ENCODE measurements at regions of chr1 and their contacts with region 1.

Region 1: DNA sequence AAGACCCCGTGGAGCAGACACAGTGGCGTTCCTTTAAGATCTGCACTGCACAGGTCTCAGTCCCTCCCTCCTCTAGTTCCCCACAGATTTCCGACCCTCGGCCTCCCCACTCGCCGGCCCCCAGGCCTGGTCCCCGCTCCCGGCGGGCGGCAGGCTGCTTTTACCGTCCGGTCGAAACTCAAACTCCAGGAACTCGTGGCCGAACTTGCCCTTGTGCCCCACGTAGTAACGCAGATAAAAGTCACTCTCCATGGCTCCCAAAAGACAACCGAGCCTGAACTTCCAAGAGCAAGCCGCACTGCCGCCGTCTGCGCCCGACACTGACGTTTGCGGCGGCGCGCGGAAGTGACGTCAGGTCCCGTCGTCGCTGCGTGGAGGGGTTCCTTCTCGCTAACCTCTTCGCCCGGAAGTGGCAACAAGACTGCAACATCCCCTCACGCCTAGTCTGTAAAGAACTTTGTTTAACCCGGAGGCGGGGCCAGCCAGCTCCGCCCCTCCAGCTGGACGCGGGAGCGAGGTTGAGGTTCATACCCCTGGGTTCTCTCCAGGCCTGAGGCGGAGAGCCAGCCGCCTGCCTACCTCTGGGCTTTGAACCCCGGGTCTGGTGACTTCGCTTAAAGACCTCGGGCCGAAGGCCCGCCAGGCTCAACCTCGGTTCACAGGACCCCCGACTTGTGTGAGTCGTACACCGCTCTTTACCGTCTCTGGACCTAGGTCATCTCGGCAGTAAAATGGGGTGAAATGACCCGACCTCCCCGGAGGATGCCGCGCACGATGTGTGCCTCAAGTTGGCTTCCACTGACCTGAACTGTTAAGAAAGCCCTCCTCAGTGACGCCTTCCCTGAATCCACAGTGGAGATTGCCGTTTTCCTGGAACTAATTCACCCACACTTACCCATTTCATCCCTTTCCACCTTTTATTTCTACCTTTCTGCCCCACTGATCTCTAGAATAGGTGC is at the start of gene MAGOH:
- DNase-seq: peak; percentile 99
- H3K4me3 Mint-ChIP-seq: peak within 1 kb of the TSS; percentile 95
- H3K27ac Mint-ChIP-seq: peak within 1 kb of the TSS; percentile 92
- H3K4me1 Mint-ChIP-seq: peaks cover 24% of the 10 kb centered on the region
- H3K27me3 Mint-ChIP-seq: no peaks in the 10 kb centered on the region
- total RNA-seq, gene MAGOH: 96.4 and 107 TPM in 2 replicates

Region 2: GRCh38 chr1:52834798-52835197 is 403.7 kb before region 1 on chr1:
- intact Hi-C with region 1: no loop called
- DNase-seq: no peak
- H3K4me3 Mint-ChIP-seq: no peak overlapping the region
- H3K27ac Mint-ChIP-seq: no peak overlapping the region
- H3K4me1 Mint-ChIP-seq: no peaks in the 10 kb centered on the region
- H3K27me3 Mint-ChIP-seq: peaks cover 4% of the 10 kb centered on the region

Region 3: DNA sequence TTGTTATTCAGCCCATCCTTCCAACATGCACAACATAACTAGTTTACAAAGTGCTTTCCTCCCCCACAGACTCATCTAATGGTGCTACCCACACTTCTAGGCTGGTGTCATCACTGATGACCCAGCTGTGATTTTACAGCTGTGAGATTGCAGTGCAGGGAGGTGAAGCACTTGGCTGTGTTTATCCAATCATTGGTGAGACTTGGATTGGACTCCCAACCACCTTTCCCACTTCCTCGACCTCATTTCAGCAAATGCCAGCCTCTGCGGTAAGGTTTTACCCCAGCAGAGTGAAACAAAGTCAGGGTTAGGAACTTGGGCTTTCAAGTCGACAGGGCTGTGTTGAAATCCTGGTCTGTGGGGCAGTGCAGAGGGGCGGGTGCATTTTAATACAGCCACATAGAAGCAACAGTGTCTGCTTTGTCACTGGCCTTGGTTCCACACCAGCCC is 339.0 kb before region 1 on chr1:
- intact Hi-C with region 1: no loop called
- DNase-seq: no peak
- H3K4me3 Mint-ChIP-seq: no peak overlapping the region
- H3K27ac Mint-ChIP-seq: no peak overlapping the region
- H3K4me1 Mint-ChIP-seq: no peaks in the 10 kb centered on the region
- H3K27me3 Mint-ChIP-seq: no peaks in the 10 kb centered on the region

Region 4: DNA sequence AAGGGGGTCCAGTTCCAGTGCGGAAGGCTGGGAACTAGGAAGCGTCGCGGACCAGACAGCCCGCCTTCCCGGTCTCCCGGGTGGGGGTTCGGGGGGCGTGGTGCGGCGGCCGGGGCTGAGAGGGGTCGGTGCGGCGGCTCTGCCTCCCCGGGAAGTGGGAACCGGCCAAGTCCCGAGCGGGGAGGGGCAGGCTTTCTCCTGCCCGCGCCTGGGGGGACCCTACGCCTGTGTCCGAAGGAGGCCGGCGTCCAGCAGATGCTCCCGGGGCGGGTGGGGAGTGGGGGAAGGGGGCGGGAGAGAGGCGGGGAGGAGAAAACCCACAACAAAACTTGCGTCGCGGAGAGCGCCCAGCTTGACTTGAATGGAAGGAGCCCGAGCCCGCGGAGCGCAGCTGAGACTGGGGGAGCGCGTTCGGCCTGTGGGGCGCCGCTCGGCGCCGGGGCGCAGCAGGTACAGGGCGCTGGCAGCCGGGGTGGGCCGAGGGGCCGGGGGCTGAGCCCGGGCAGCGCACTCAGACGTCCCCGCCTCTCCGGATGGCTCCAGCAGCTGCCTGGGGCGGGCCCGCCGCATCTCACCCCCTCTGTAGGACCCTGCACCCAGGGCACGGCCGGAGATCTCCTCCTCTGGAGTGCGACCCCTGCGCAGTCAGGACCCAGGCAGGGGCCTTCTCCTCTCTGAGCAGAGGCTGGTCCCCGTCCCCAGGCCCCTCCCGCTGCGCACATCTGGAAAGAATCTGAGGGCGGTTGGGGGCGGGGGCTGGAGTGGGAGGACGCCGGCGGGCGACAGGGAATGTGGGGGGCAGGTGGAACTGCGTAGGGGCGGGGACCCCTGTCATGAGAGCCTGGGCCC is 176.4 kb before region 1 on chr1 and contains the start of gene PODN:
- intact Hi-C with region 1: no loop called
- DNase-seq: no peak
- H3K4me3 Mint-ChIP-seq: peak within 1 kb of the TSS; percentile 56
- H3K27ac Mint-ChIP-seq: no peak within 1 kb of the TSS
- H3K4me1 Mint-ChIP-seq: peaks cover 1% of the 10 kb centered on the region
- H3K27me3 Mint-ChIP-seq: peaks cover 58% of the 10 kb centered on the region
- total RNA-seq, gene PODN: not detected in 2 replicates

Region 5: DNA sequence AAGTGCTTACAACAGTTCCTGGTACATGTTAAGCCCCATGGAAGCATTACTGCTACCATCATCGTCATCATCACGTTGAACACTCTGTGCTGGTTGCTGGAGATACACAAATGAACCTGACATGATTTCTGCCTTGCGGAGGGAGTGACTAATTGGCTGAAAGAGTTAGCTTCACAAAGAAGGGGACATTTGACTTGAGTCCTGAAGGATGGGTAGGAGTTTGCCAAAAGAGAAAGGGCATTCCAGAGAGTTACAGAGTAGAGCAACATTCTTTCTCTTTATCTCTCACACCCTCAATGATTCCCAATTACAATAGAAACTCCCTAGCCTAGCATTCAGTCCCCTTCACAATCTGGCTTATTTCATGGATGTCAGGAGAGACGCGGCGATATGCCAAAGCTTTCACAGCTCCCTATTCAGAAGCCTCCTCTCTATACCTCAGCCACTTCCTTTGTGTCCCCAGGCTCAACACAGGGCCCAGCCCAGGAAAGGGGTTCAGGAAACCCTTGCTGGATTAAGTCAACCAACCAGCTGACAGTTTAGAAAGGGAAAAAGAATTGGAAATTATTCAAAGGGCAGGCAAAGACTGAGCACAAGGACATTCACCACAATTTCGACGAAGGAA is 134.1 kb before region 1 on chr1:
- intact Hi-C with region 1: no loop called
- DNase-seq: no peak
- H3K4me3 Mint-ChIP-seq: no peak overlapping the region
- H3K27ac Mint-ChIP-seq: no peak overlapping the region
- H3K4me1 Mint-ChIP-seq: peaks cover 8% of the 10 kb centered on the region
- H3K27me3 Mint-ChIP-seq: peaks cover 3% of the 10 kb centered on the region

Region 6: GRCh38 chr1:53220171-53220961 is 18.1 kb before region 1 on chr1 and contains the start of gene CZIB:
- intact Hi-C with region 1: loop called (anchors 1 kb)
- DNase-seq: peak; percentile 99
- H3K4me3 Mint-ChIP-seq: peak within 1 kb of the TSS; percentile 94
- H3K27ac Mint-ChIP-seq: peak within 1 kb of the TSS; percentile 97
- H3K4me1 Mint-ChIP-seq: peaks cover 23% of the 10 kb centered on the region
- H3K27me3 Mint-ChIP-seq: no peaks in the 10 kb centered on the region
- total RNA-seq, gene CZIB: 44.7 and 44.9 TPM in 2 replicates

Measured in activated CD4-positive, alpha-beta T cell treated with anti-CD3 and anti-CD28 coated beads, Interleukin-2, amount 10 ng/mL, durations not matched to agents 24 days and 14 days (primary cell).